Naive thymus-derived CD8-positive, alpha-beta T cell (primary cell): ENCODE measurements at regions of chr5 and their contacts with region 1.

Region 1: DNA sequence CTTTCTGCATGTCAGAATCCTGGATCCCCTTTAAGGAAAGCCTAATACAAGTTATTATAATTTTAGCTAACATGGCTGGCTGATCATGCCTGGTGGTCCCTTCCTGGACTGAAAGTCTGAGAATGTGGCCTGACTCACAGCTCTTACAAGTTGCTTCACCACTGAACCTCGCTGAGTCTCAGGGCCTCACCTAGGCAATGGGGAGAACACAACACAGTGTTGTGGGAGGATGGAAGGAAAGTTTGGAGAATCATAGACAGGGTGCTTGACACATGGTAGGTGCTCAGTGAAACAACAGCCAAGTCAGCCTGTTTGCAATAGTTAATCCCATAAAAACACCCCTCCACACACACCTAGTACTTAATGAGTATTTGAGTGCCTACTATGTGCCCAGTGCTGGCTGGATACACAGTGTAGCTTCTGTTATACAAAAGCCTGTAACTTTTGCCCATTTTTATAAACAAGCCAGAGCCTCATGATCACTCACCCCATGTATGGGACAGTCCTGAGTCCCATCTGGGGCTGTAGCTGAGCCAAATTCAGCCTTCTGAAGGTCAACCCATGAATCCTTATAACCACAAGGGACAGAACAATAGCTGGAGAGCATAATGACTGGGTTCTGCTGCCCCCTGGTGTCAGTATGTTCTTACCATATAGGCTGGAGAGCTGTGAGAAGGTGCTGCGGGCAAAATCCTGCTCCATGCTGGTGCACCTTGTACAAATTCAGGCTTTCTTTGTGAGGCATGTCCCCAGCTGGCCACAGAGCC is 3.9 kb downstream of the ACSL6 start:
- DNase-seq: peak; percentile 43 to 88 (median 64)
- ATAC-seq: peak; percentile 52 to 57
- H3K4me3 Mint-ChIP-seq: peak overlapping the region in 1 of 10 donors; percentile 45
- H3K27ac Mint-ChIP-seq: peak overlapping the region in 4 of 10 donors; percentile 5 to 50 (median 15)
- H3K4me1 Mint-ChIP-seq: peaks cover 15 to 33% (median 28%) of the 10 kb centered on the region in 4 donors
- H3K27me3 Mint-ChIP-seq: peaks cover 2 to 19% (median 12%) of the 10 kb centered on the region in 5 donors

Region 2: DNA sequence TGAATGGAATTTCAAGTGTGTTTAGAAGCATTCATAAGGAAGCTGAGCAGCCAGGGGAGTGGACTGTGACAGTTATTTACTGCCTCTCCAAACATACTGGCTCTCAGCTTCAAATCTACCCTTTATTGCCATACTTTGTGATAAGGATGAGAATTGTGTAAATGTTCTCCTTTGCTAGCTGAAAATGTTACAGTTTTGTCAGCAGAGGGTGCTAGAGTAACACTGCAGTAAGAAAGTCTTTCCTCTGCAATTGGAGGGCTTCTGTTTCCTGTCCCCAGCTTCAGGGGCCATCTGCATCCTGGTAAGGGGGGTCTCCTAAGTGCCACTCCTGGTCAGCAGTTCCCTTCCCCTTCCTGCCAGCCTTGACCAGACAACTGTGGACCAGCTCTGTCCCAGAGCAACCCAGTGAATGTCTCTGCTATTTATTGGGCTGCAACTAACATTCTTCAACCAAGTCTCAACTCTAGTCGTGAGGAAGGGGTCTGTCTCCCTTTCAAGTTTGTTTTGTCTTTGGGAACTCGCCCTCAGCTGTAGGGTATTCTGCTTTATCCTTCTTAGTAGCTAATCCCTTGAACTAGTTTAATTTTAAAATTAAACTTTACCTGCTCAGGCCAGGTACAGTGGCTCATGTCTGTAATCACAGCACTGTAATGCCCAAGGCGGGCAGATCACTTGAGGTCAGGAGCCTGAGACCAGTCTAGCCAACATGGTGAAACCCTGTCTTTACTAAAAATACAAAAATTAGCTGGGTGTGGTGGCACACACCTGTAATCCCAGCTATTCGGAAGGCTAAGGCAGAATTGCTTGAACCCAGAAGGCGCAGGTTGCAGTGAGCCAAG is 417.9 kb before region 1 on chr5:
- POLR2A ChIA-PET with region 1: interaction called, 11 read pairs
- DNase-seq: peak in 8 of 10 donors; percentile 12 to 73 (median 56)
- ATAC-seq: peak; percentile 75 to 80
- H3K4me3 Mint-ChIP-seq: no peak overlapping the region
- H3K27ac Mint-ChIP-seq: peak overlapping the region in 9 of 10 donors; percentile 37 to 88 (median 59)
- H3K4me1 Mint-ChIP-seq: peaks cover 19 to 56% (median 48%) of the 10 kb centered on the region in 4 donors
- H3K27me3 Mint-ChIP-seq: no peaks in the 10 kb centered on the region

Region 3: GRCh38 chr5:131983244-131983771 is 24.3 kb before region 1 on chr5:
- POLR2A ChIA-PET with region 1: no interaction called
- DNase-seq: no peak
- ATAC-seq: no peak
- H3K4me3 Mint-ChIP-seq: no peak overlapping the region
- H3K27ac Mint-ChIP-seq: peak overlapping the region in 2 of 10 donors; percentile 28 to 41
- H3K4me1 Mint-ChIP-seq: peaks cover 9 to 33% (median 20%) of the 10 kb centered on the region in 4 donors
- H3K27me3 Mint-ChIP-seq: no peaks in the 10 kb centered on the region

Region 4: GRCh38 chr5:133316427-133316826 is 1308.8 kb after region 1 on chr5:
- POLR2A ChIA-PET with region 1: no interaction called
- DNase-seq: no peak
- ATAC-seq: no peak
- H3K4me3 Mint-ChIP-seq: no peak overlapping the region
- H3K27ac Mint-ChIP-seq: peak overlapping the region in 1 of 10 donors; percentile 13
- H3K4me1 Mint-ChIP-seq: no peaks in the 10 kb centered on the region
- H3K27me3 Mint-ChIP-seq: no peaks in the 10 kb centered on the region